Mammary epithelial cell (primary cell): ENCODE measurements at regions of chr16 and their contacts with region 1.

Region 1: DNA sequence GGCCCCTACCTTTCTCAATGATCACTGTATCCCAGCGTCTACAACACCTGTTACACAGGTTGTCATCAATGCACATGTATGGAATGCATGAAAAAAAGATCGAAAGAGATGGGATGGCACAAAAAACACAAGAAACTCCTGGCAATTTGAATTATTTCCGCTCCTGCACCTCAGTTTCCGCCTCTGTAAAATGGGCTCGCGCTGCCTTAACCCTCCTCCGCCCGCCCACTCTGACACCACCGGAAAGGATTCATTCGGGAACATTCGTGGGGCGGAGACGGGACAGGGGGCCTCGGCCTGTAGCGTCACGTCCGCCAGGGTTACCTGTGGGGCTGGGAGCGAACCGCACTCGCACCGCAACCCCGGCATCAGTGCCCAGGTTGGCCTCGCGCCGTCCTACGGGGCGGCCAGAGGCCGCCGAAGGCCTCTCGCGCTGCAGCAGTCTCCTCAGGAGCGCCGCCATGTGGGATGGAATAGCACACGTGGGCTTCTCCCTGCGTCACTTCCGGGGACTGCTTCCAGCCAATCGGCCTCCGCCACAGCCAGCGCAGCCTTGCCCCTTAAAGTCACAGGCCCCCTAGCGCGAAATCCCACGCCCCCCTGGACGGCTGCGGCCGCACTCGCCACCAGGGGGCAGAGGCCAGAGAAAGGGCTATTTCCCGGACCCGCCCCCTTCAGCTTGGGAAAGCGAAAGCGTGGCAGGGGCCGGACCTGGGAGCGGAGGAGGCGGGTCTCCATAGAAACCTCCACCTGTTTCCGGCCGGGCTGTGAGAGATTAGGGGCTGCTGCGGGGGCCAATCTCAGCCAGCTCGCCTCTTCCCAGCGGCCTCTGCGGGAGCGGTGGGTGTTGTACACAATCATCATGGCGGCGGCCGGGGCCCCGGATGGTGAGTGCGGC is at the starts of genes EARS2 and UBFD1:
- DNase-seq: peak; percentile 99
- H3K4me3 ChIP-seq: peak within 1 kb of the TSS; percentile 92 to 96 (median 95)
- H3K27ac ChIP-seq: peak within 1 kb of the TSS; percentile 91
- H3K4me1 ChIP-seq: peaks cover 11% of the 10 kb centered on the region
- H3K27me3 ChIP-seq: no peaks in the 10 kb centered on the region
- CTCF ChIP-seq: peak; percentile 75 to 96
- total RNA-seq, gene EARS2: 30.1 to 47.7 TPM
- total RNA-seq, gene UBFD1: 57.3 to 79.7 TPM

Region 2: DNA sequence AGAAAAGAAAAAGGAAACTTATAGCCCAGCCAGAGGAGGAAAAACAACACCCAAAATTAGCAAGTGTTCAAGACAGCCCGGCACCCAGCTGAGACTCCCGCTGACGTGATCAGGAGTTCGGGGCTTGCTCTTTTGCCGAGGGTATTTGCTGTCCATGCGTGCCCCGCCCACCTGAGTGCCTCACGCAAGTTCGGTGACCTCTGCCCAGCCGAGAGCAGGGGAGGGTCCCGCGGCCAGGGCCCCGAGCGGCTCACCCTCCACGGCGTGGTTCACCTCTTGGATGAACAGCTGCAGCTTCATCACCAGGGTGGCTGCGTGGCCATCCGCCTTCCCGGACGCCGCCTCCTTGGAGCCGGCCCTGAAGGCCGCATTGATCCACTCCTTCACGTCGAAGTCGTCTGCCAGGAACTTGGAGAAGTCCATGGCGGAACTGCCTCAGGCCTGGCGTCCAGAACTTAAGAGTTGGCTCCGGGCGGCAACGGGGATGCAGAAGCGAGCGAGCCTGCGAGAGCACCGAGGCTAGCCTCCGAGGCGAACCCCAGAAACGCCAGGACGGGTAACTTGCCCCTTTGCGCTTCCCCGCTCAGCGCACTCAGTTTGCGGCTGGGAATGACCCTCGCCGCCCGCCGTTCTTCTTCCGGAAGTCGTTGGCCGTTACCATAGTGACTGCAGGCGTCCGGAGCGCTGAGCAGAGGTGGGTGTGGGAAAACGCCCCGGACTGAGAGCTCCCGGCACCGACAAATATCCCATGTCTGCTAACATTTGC is 104.4 kb before region 1 on chr16 and contains the start of gene COG7:
- CTCF ChIA-PET with region 1: no interaction called
- dilution Hi-C with region 1: no loop called
- in situ Hi-C with region 1: no loop called
- intact Hi-C with region 1: loop called (anchors 1 kb)
- DNase-seq: peak; percentile 86
- H3K4me3 ChIP-seq: peak within 1 kb of the TSS; percentile 70 to 96 (median 79)
- H3K27ac ChIP-seq: peak within 1 kb of the TSS; percentile 53
- H3K4me1 ChIP-seq: peaks cover 12% of the 10 kb centered on the region
- H3K27me3 ChIP-seq: no peaks in the 10 kb centered on the region
- CTCF ChIP-seq: no peak
- total RNA-seq, gene COG7: 19.2 to 20.8 TPM